ENCODE measurements at regions of chr1 and their contacts with region 1.

Region 1: DNA sequence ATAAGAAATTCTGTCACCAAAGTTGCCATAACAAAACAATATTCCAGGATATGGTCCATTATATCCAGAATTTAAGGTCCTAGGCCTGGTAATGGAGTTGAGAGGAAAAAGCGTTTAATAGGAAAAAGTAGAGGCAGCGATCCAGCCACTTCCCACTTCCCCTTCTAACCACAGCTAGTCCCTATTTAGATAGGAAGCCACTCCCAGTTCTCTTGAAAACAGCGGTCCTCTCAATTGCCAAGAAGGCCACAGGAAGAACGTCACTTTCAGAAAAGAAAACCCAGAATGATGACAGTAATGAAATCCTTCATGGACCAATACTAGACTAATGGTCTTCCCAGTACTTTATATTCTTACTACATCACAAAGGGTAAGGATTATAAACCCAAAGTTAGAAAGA is 38.6 kb downstream of the ABL2 start:
- DNase-seq: no peak
- H3K4me3 ChIP-seq: no peak overlapping the region
- H3K27ac ChIP-seq: peak overlapping the region in 1 of 2 donors; percentile 29
- H3K4me1 ChIP-seq: peaks cover 0 to 8% (median 2%) of the 10 kb centered on the region in 4 donors
- H3K27me3 ChIP-seq: no peaks in the 10 kb centered on the region
- CTCF ChIP-seq: no peak

Region 2: GRCh38 chr1:179121159-179121938 is 69.5 kb before region 1 on chr1:
- intact Hi-C with region 1: loop called (anchors 5 kb)
- DNase-seq: no peak
- H3K4me3 ChIP-seq: no peak overlapping the region
- H3K27ac ChIP-seq: no peak overlapping the region
- H3K4me1 ChIP-seq: peaks cover 0 to 9% (median 4%) of the 10 kb centered on the region in 4 donors
- H3K27me3 ChIP-seq: no peaks in the 10 kb centered on the region
- CTCF ChIP-seq: peak; percentile 51 to 67

Region 3: GRCh38 chr1:179365320-179366092 is 174.6 kb after region 1 on chr1 and contains the start of gene AXDND1:
- intact Hi-C with region 1: loop called (anchors 10 kb)
- DNase-seq: peak; percentile 87 to 88
- H3K4me3 ChIP-seq: peak within 1 kb of the TSS; percentile 57 to 84
- H3K27ac ChIP-seq: peak within 1 kb of the TSS; percentile 85 to 92
- H3K4me1 ChIP-seq: peaks cover 0 to 16% (median 8%) of the 10 kb centered on the region in 4 donors
- H3K27me3 ChIP-seq: no peaks in the 10 kb centered on the region
- CTCF ChIP-seq: peak in 1 of 2 experiments; percentile 5